Activated T-helper 1 cell treated with anti-CD3 and anti-CD28 coated beads, Interleukin-12 subunit alpha, Interleukin-12 subunit beta, Interleukin-2, Interleukin-4 antibody, amounts not matched to agents 30 ng/mL and 10 ng/mL and 1 ng/mL, durations not matched to agents 14 hours and 24 hours and 36 hours (primary cell): ENCODE measurements at regions of chr11 and their contacts with region 1.

Region 1: DNA sequence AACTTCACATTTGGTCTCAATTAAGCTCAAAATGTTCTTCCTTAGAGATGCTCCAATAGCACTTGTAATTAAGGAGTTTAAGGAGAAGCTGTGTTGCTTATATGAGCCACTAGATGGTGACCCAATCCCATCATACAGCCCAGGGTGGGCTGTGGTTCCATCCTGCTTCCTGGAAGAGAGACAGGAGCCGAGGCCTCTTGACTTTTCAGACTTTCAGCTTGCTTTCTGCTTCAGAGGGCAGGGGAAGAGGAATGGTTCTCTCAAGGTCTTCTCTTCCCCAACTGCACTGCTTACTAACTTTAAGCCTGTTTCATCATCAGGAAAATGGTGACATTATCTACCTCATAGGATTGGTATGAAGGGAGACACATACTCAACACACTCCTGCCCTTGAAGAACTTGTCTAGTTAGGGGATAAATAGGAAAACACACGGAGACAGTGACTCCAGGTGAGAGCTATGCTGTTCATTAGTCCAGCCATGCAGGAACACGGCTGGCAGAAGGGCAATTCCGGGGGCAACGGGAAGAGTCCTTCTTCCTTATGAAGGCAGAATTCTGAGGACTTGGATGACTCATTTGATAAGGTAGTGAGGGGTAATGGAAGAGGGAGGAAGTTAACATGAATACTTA is 20.1 kb downstream of the TMEM218 start:
- DNase-seq: no peak
- H3K4me3 Mint-ChIP-seq: no peak overlapping the region
- H3K27ac Mint-ChIP-seq: no peak overlapping the region
- H3K4me1 Mint-ChIP-seq: peaks cover 5% of the 10 kb centered on the region
- H3K27me3 Mint-ChIP-seq: no peaks in the 10 kb centered on the region

Region 2: DNA sequence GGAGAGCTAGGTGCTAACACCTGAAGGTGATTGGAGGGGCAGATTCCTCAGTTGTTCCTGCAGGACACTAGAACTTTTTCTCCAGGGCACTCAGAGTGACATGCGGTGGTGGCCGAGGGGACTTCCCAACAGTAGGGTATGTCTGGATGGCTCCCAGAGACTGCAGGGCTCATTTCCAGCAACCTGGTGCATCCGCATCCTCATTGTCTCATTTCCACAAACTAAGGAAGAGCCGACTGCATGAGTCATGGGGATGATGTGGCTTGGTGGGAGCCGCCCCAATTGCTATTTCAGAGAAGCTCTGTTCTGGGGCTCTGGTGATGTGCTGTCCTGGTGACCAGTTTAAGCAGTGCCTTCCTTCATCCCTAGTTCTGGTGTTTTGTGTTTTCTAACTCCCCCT is 190.9 kb before region 1 on chr11:
- intact Hi-C with region 1: no loop called
- DNase-seq: no peak
- H3K4me3 Mint-ChIP-seq: no peak overlapping the region
- H3K27ac Mint-ChIP-seq: no peak overlapping the region
- H3K4me1 Mint-ChIP-seq: peaks cover 4% of the 10 kb centered on the region
- H3K27me3 Mint-ChIP-seq: peaks cover 14% of the 10 kb centered on the region

Region 3: GRCh38 chr11:125123947-125124617 is 32.7 kb after region 1 on chr11:
- intact Hi-C with region 1: loop called (anchors 2 kb)
- DNase-seq: no peak
- H3K4me3 Mint-ChIP-seq: no peak overlapping the region
- H3K27ac Mint-ChIP-seq: no peak overlapping the region
- H3K4me1 Mint-ChIP-seq: no peaks in the 10 kb centered on the region
- H3K27me3 Mint-ChIP-seq: peaks cover 33% of the 10 kb centered on the region

Region 4: DNA sequence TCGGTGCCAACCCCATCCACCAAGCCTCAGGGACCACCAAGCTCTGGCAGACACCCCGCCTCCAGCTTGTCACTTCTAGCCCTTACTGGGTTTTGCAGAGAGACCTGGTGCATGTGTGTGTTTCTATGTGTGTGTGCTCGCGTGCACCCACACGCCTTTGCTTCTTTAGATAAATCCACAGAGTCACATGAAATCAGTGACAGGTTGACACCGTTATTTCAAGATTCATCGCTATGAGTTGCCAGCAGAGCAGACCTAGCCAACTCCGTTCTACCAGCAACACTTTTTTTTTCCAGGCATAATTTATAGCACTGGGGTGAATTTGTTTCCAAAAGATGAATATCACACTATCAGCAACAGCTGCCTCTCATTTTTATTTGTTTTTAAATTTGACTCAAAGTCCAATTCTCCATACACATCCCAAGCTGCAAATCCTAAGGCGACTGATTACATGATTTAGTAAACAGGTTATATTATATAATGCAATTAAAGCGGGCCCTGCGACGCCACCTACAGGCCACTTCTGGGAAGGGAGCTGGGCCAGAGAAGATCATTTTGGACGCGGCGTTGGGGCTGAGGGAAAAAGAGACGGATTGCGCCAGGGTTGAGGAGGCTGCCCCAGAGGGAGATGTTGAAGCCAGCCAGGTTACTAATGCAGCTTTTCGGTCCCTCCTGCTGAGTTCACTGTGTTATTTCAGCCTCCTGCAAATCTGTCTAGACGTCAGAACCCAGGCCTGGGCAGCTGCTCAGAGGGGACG is 254.2 kb after region 1 on chr11:
- intact Hi-C with region 1: loop called (anchors 5 kb)
- DNase-seq: peak; percentile 9
- H3K4me3 Mint-ChIP-seq: no peak overlapping the region
- H3K27ac Mint-ChIP-seq: no peak overlapping the region
- H3K4me1 Mint-ChIP-seq: no peaks in the 10 kb centered on the region
- H3K27me3 Mint-ChIP-seq: peaks cover 8% of the 10 kb centered on the region